Cardiac septum (tissue), 1 donor: ENCODE measurements at regions of chr5 and their contacts with region 1.

Region 1: DNA sequence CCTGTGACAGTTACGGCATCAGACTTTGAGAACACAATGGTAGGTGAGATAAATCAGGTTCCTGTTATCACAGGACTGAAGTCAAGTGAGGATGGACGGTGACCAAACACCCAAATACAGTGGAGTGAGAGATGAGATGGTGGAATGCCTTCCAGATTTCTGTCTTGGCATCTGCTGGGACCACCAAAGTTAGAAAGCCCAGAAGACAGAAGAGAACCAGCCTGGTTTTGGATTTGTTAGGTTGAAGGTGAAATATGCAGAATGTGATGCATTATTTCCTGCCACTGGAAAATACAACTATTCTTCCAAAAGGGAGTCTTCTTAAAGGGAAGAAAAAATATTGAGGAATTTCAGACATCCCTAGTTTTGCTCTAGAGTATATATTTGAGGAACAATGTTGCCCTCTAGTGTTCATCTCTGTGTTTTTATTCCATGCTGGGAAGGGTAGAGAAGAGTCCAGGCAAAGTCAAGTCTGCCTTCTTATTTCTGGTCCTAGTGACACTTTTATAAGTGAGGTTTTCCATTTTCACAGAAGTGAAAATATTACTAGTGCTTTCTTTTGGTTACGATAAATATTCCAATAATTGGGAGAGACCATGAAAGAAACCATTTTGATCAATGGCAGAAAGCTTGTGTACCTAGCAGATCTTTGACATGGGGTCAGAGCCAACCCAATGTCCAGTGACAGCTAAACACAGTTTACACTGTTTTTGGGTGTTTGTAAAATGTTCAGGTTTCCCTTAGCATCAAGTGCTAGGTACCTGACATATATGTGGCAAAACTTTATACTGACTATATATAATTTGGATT is 142.3 kb upstream of the ANKH start:
- DNase-seq: no peak

Region 2: DNA sequence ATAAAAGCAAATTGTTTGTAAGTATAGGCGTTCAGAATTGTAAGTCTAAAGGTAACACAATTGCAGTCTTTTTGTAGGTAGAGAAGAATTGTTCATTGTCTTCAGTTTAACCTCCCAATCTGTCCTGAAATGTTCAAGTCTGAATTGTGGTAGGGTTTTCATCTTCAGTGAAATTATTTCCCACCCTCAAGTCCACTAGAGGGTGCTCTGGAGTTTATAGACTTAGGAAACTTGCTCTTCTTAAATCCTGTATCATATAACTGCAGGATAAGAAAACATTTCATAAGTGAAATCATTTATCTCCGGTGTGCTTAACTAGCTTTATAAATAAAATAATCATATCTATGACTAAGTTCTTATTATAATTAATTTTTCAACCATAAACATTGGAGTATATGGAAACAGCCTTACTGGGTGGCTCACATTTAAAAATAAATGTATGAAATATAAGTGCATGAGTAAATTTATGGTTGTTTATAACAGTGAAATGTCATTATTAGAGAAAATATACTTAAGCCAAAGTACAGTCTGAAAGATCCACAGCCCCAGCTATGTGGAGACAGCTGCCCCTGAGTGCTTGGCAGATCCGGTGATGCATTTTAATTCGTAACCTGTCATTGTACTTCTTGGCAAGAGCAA is 614.7 kb before region 1 on chr5:
- intact Hi-C with region 1: loop called (anchors 5 kb)
- DNase-seq: no peak

Region 3: GRCh38 chr5:15044521-15044920 is 30.7 kb after region 1 on chr5:
- intact Hi-C with region 1: no loop called
- DNase-seq: no peak